ENCODE measurements at regions of chr6 and their contacts with region 1.

Region 1: GRCh38 chr6:32868257-32868788 is 14.3 kb downstream of the PSMB9 start:
- DNase-seq: peak; percentile 72
- H3K4me3 ChIP-seq: no peak overlapping the region
- H3K27ac ChIP-seq: no peak overlapping the region
- H3K4me1 ChIP-seq: no peaks in the 10 kb centered on the region
- H3K27me3 ChIP-seq: no peaks in the 10 kb centered on the region
- CTCF ChIP-seq: peak; percentile 82 to 97 (median 93)
- POLR2A ChIP-seq: no peak

Region 2: DNA sequence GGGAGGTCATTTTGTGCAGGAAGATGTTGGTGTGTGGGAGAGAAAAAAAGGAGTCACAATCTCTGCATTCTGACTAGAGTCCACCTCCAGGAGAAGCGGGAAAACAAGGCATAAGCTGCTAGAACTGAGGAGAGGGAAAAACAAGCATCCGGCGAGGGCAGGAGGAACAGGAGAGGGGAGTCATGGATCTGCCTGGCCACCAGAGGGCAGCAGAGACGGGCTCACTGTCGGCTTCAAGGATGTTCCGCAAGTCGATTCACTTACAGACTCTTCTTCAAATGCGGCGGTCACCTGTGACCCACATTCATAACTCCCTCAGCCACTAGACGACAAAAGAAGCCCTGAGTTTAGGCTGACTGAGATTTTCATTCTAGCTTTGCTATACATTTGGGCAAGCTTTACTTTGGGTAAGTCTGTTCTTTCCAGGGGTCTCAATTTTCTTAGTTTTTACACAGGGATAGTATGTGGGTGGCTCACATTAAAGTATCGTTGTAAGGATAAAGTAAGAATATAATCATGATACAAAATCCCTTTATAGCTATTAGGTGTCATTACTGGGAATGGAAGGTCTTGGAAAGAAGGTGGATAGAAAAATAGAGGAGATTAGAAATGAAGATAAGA is 454.8 kb before region 1 on chr6:
- intact Hi-C with region 1: loop called (anchors 10 kb)
- DNase-seq: peak; percentile 75
- H3K4me3 ChIP-seq: no peak overlapping the region
- H3K27ac ChIP-seq: no peak overlapping the region
- H3K4me1 ChIP-seq: no peaks in the 10 kb centered on the region
- H3K27me3 ChIP-seq: no peaks in the 10 kb centered on the region
- CTCF ChIP-seq: peak; percentile 78 to 92 (median 88)
- POLR2A ChIP-seq: no peak

Region 3: GRCh38 chr6:32825966-32826365 is 42.4 kb before region 1 on chr6:
- intact Hi-C with region 1: loop called (anchors 5 kb)
- DNase-seq: no peak
- H3K4me3 ChIP-seq: no peak overlapping the region
- H3K27ac ChIP-seq: no peak overlapping the region
- H3K4me1 ChIP-seq: no peaks in the 10 kb centered on the region
- H3K27me3 ChIP-seq: no peaks in the 10 kb centered on the region
- CTCF ChIP-seq: peak in 3 of 4 experiments; percentile 18 to 47 (median 44)
- POLR2A ChIP-seq: no peak

Region 4: GRCh38 chr6:32838114-32838958 is 30.0 kb before region 1 on chr6 and contains the start of gene TAP2:
- intact Hi-C with region 1: loop called (anchors 5 kb)
- DNase-seq: peak; percentile 94
- H3K4me3 ChIP-seq: peak within 1 kb of the TSS; percentile 61 to 81
- H3K27ac ChIP-seq: peak within 1 kb of the TSS; percentile 94 to 96
- H3K4me1 ChIP-seq: peaks cover 2% of the 10 kb centered on the region
- H3K27me3 ChIP-seq: no peaks in the 10 kb centered on the region
- CTCF ChIP-seq: peak; percentile 85 to 99 (median 98)
- POLR2A ChIP-seq: peak; percentile 75
- total RNA-seq, gene TAP2: 7.1 to 15.8 TPM

Region 5: DNA sequence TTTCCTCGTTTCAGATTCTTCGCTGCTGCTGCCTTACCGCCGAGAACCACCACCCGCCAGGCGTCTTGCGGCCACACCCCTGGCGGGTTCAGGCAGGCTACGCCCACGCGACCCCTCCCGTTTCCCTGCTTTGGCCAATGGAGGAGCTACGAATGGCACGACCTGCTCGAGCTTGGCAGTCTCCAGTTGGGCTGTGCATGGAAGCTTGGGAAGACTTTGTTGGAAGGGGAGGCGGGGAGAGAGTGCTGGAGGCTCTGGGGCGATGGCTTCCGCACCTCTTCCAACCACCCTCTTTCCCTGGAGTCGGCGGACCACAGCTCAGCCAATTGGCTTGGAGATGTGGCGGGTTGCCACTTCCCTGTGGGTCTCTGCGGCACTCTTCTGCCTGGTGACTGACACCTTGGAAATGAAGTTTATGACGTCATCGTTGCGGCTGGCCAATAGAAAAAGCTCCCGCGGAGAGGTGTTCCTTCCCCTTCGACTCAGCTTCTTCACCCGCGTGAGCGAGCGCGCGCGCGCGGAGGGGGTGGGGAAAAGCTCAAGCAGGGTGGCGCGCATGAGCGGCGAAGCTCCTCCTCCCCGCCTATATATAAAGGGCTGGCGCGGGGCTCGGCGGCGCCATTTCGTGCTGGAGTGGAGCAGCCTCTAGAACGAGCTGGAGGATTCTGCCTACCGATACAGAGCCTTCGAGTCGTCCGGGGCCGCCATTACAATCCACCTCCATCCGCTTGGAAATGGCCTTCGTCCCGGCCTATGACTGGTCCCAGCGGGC is 103.4 kb after region 1 on chr6:
- intact Hi-C with region 1: no loop called
- DNase-seq: peak; percentile 99
- H3K4me3 ChIP-seq: peak overlapping the region; percentile 84 to 91
- H3K27ac ChIP-seq: peak overlapping the region; percentile 99 to 100
- H3K4me1 ChIP-seq: peaks cover 10% of the 10 kb centered on the region
- H3K27me3 ChIP-seq: no peaks in the 10 kb centered on the region
- CTCF ChIP-seq: peak in 2 of 4 experiments; percentile 27 to 45
- POLR2A ChIP-seq: peak; percentile 96

Measured in prostate gland (tissue), 2 donors.